Panc1 (cell line): ENCODE measurements at regions of chr2 and their contacts with region 1.

Region 1: GRCh38 chr2:170643335-170643734 is 71.8 kb upstream of the SP5 start:
- DNase-seq: no peak
- ATAC-seq: no peak
- H3K4me3 ChIP-seq: no peak overlapping the region
- H3K27ac ChIP-seq: no peak overlapping the region
- H3K4me1 ChIP-seq: no peaks in the 10 kb centered on the region
- H3K27me3 ChIP-seq: no peaks in the 10 kb centered on the region; the same call in none of the 2 replicates
- CTCF ChIP-seq: no peak

Region 2: DNA sequence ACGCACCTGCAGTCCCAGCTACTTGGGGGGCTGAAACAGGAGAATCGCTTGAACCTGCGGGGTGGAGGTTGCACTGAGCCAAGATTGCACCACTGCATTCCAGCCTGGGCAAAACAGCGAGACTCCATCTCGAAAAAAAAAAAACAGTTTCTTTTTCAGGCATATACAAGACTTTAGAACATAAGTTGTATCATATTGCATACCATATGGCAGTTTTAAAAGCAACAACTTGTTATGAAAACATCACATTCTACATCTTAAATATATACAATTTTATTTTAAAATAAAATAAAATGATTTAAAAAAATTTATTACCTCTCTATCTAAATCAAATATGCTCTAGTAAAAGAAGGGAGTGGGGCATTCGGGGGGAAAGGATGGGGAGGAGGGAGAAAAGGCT is 32.4 kb after region 1 on chr2:
- CTCF ChIA-PET with region 1: no interaction called
- POLR2A ChIA-PET with region 1: interaction called, 14 read pairs
- in situ Hi-C with region 1: no loop called
- intact Hi-C with region 1: no loop called
- DNase-seq: no peak
- ATAC-seq: no peak
- H3K4me3 ChIP-seq: no peak overlapping the region
- H3K27ac ChIP-seq: no peak overlapping the region
- H3K4me1 ChIP-seq: no peaks in the 10 kb centered on the region
- H3K27me3 ChIP-seq: peaks cover 3% of the 10 kb centered on the region
- CTCF ChIP-seq: no peak